OCI-LY7 (cell line): ENCODE measurements at regions of chr3 and their contacts with region 1.

Region 1: GRCh38 chr3:162441716-162442115 is 945.1 kb downstream of the OTOL1 start:
- DNase-seq: no peak
- H3K4me3 ChIP-seq: no peak overlapping the region
- H3K27ac ChIP-seq: no peak overlapping the region
- H3K4me1 ChIP-seq: no peaks in the 10 kb centered on the region
- CTCF ChIP-seq: no peak

Region 2: GRCh38 chr3:161770484-161771386 is 671.0 kb before region 1 on chr3:
- CTCF ChIA-PET with region 1: no interaction called
- POLR2A ChIA-PET with region 1: no interaction called
- intact Hi-C with region 1: no loop called
- DNase-seq: no peak
- H3K4me3 ChIP-seq: no peak overlapping the region
- H3K27ac ChIP-seq: no peak overlapping the region
- H3K4me1 ChIP-seq: no peaks in the 10 kb centered on the region
- CTCF ChIP-seq: no peak

Region 3: DNA sequence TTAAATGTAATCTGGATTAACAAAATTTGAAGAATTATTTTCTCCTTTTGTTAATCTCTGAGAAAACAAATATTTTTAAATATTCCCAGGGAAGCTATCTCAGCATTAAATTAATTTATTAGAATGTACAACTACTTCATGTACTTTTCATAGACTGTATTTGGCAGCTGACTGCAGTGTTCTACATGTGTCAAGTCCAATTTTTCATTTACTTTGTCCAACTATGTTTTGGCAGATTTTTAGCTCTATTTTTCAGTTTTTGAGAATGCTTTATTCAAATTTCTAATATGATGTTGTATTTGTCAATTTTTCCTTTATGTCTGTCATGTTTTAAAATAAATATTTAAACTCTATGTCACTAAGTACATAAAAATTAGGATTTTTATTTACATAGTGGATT is 20.0 kb before region 1 on chr3:
- CTCF ChIA-PET with region 1: no interaction called
- POLR2A ChIA-PET with region 1: no interaction called
- intact Hi-C with region 1: loop called (anchors 2 kb)
- DNase-seq: no peak
- H3K4me3 ChIP-seq: no peak overlapping the region
- H3K27ac ChIP-seq: no peak overlapping the region
- H3K4me1 ChIP-seq: no peaks in the 10 kb centered on the region
- CTCF ChIP-seq: no peak